ENCODE measurements at regions of chr3 and their contacts with region 1.

Region 1: GRCh38 chr3:177729956-177730681 is 532.8 kb upstream of the TBL1XR1 start:
- DNase-seq: peak; percentile 39 to 59
- ATAC-seq: peak; percentile 60 to 71
- H3K4me3 ChIP-seq: no peak overlapping the region
- H3K27ac ChIP-seq: peak overlapping the region; percentile 20 to 45 (median 30)
- H3K4me1 ChIP-seq: peaks cover 11 to 25% of the 10 kb centered on the region in 2 donors
- H3K27me3 ChIP-seq: no peaks in the 10 kb centered on the region
- CTCF ChIP-seq: no peak
- POLR2A ChIP-seq: no peak

Region 2: GRCh38 chr3:176953106-176954060 is 776.7 kb before region 1 on chr3:
- in situ Hi-C with region 1: no loop called
- intact Hi-C with region 1: loop called (anchors 5 kb)
- DNase-seq: peak; percentile 87 to 93
- ATAC-seq: peak; percentile 84 to 86
- H3K4me3 ChIP-seq: no peak overlapping the region
- H3K27ac ChIP-seq: peak overlapping the region; percentile 53 to 80 (median 68)
- H3K4me1 ChIP-seq: peaks cover 42% of the 10 kb centered on the region in 2 donors
- H3K27me3 ChIP-seq: no peaks in the 10 kb centered on the region
- CTCF ChIP-seq: no peak
- POLR2A ChIP-seq: no peak

Measured in gastrocnemius medialis (tissue), 4 donors.